Lower lobe of right lung (tissue), 2 donors: ENCODE measurements at regions of chr3 and their contacts with region 1.

Region 1: GRCh38 chr3:126245811-126246727 is 65.7 kb upstream of the ALDH1L1 start:
- DNase-seq: no peak
- ATAC-seq: peak; percentile 50 to 87
- H3K4me3 ChIP-seq: no peak overlapping the region
- H3K27ac ChIP-seq: no peak overlapping the region
- H3K4me1 ChIP-seq: no peaks in the 10 kb centered on the region
- H3K27me3 ChIP-seq: no peaks in the 10 kb centered on the region
- CTCF ChIP-seq: peak; percentile 57

Region 2: GRCh38 chr3:126394575-126395228 is 148.6 kb after region 1 on chr3 and contains the start of gene CFAP100:
- intact Hi-C with region 1: loop called (anchors 10 kb)
- DNase-seq: peak; percentile 78
- ATAC-seq: peak; percentile 72 to 86
- H3K4me3 ChIP-seq: peak within 1 kb of the TSS; percentile 36
- H3K27ac ChIP-seq: no peak within 1 kb of the TSS
- H3K4me1 ChIP-seq: peaks cover 11% of the 10 kb centered on the region
- H3K27me3 ChIP-seq: peaks cover 21% of the 10 kb centered on the region
- CTCF ChIP-seq: no peak
- total RNA-seq, gene CFAP100: 21.5 TPM